T-cell (primary cell): ENCODE measurements at regions of chr3 and their contacts with region 1.

Region 1: DNA sequence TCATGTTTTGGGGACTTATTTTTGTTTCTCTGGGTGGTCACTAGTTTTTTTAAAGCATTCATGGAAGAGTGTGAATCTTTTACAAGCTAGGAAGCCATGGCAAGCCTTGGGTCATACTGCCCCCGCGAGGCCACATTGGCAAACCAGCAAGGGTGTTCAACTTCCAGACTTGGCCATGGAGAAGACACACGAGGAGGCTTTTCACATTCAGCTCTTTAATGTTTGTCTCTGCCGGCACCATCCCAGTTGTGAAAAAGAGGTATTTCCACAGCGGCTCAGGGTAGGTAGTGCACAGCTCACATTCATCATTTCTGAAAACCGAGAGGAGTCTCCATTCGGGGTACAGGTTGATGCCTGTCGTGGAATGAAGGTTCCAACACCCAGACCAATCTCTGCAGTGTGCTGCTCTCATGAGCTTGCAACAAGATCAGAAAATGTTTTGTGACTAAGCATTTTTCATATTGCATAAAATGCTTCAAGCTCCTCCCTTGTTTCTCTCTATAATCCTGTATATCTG is 7.7 kb downstream of the CCR5 start:
- DNase-seq: peak; percentile 20 to 74 (median 53)
- ATAC-seq: peak in 2 of 4 experiments; percentile 43 to 54
- H3K4me3 ChIP-seq: no peak overlapping the region
- H3K4me3 Mint-ChIP-seq: no peak overlapping the region
- H3K27ac ChIP-seq: no peak overlapping the region
- H3K27ac Mint-ChIP-seq: no peak overlapping the region
- H3K4me1 ChIP-seq: peaks cover 14 to 38% of the 10 kb centered on the region in 2 experiments
- H3K4me1 Mint-ChIP-seq: peaks cover 41 to 53% (median 50%) of the 10 kb centered on the region in 3 donors
- H3K27me3 ChIP-seq: no peaks in the 10 kb centered on the region
- H3K27me3 Mint-ChIP-seq: no peaks in the 10 kb centered on the region

Region 2: GRCh38 chr3:46276502-46277099 is 101.9 kb before region 1 on chr3:
- CTCF ChIA-PET with region 1: interaction called, 4 to 139 read pairs
- POLR2A ChIA-PET with region 1: no interaction called
- DNase-seq: peak; percentile 37 to 85 (median 66)
- ATAC-seq: peak; percentile 74 to 86 (median 83)
- H3K4me3 ChIP-seq: no peak overlapping the region
- H3K4me3 Mint-ChIP-seq: no peak overlapping the region
- H3K27ac ChIP-seq: no peak overlapping the region
- H3K27ac Mint-ChIP-seq: peak overlapping the region in 1 of 2 donors; percentile 77
- H3K4me1 ChIP-seq: peaks cover 7 to 50% of the 10 kb centered on the region in 2 experiments
- H3K4me1 Mint-ChIP-seq: peaks cover 32 to 42% (median 40%) of the 10 kb centered on the region in 3 donors
- H3K27me3 ChIP-seq: no peaks in the 10 kb centered on the region
- H3K27me3 Mint-ChIP-seq: no peaks in the 10 kb centered on the region

Region 3: GRCh38 chr3:47057212-47057671 is 678.8 kb after region 1 on chr3:
- CTCF ChIA-PET with region 1: no interaction called
- POLR2A ChIA-PET with region 1: no interaction called
- DNase-seq: peak in 34 of 35 experiments; percentile 26 to 79 (median 49)
- ATAC-seq: peak; percentile 78 to 93 (median 86)
- H3K4me3 ChIP-seq: no peak overlapping the region
- H3K4me3 Mint-ChIP-seq: peak overlapping the region; percentile 14 to 31 (median 20)
- H3K27ac ChIP-seq: peak overlapping the region; percentile 67
- H3K27ac Mint-ChIP-seq: peak overlapping the region; percentile 87 to 93
- H3K4me1 ChIP-seq: peaks cover 3 to 11% of the 10 kb centered on the region in 2 experiments
- H3K4me1 Mint-ChIP-seq: peaks cover 48 to 56% (median 50%) of the 10 kb centered on the region in 3 donors
- H3K27me3 ChIP-seq: no peaks in the 10 kb centered on the region
- H3K27me3 Mint-ChIP-seq: no peaks in the 10 kb centered on the region